Mammary epithelial cell (primary cell): ENCODE measurements at regions of chr3 and their contacts with region 1.

Region 1: GRCh38 chr3:49171119-49171774 is at the start of gene KLHDC8B:
- DNase-seq: peak; percentile 63
- H3K4me3 ChIP-seq: peak within 1 kb of the TSS; percentile 66 to 78 (median 70)
- H3K27ac ChIP-seq: no peak within 1 kb of the TSS
- H3K4me1 ChIP-seq: peaks cover 9% of the 10 kb centered on the region
- H3K27me3 ChIP-seq: no peaks in the 10 kb centered on the region
- CTCF ChIP-seq: peak; percentile 83 to 97
- total RNA-seq, gene KLHDC8B: 10.9 to 25.7 TPM

Region 2: GRCh38 chr3:49276475-49277382 is 105.5 kb after region 1 on chr3 and contains the start of gene C3orf62:
- CTCF ChIA-PET with region 1: interaction called, 7 read pairs
- dilution Hi-C with region 1: no loop called
- in situ Hi-C with region 1: loop called in 1 of 2 experiments (anchors 10 kb)
- intact Hi-C with region 1: loop called (anchors 2 kb)
- DNase-seq: peak; percentile 54
- H3K4me3 ChIP-seq: peak within 1 kb of the TSS; percentile 25 to 53 (median 25)
- H3K27ac ChIP-seq: no peak within 1 kb of the TSS
- H3K4me1 ChIP-seq: peaks cover 14% of the 10 kb centered on the region
- H3K27me3 ChIP-seq: no peaks in the 10 kb centered on the region
- CTCF ChIP-seq: no peak
- total RNA-seq, gene C3orf62: 2.3 to 5.7 TPM

Region 3: DNA sequence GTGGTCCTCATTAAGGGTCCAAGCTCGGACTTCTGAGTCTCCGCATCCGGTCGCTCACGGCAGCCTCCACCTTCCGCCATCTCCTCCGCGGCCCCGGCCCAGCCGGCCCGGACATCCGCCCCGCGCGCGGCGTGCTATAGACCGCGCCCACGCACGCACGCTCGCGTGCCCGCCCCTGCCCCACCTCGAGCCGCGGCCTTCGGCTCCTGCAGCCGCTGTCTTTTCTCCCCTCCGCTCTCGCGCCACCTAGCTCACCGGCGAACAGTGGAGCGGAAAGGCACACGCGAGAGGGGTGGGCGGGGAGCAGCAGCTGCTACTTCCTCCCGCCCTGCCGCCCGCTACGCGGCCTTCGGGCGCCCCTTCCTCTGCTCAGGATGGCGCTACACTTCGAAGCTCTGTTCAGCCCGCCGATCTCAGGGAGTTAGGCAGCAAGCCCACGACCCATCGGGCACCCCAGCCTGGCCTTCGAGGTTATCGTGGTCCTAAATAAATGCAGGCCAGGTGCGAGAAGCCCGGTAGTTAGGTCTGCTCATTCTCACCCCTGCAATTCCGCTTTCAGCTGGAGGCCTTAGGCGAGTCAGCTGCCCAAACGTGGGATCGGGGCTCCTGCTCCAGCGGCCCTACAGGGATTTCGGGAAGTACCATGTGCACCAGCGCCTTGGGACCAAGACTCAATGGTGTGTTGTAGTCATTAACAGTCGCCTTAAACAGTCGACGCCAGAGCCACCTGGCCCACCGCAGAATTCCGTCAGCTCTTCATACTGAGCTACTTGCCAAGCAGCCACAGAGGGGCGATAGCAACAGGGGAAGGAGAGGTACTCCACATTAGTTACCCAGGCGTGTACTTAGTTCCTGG is 168.9 kb after region 1 on chr3 and contains the start of gene USP4:
- CTCF ChIA-PET with region 1: no interaction called
- dilution Hi-C with region 1: no loop called
- in situ Hi-C with region 1: no loop called
- intact Hi-C with region 1: loop called (anchors 1 kb)
- DNase-seq: peak; percentile 85
- H3K4me3 ChIP-seq: peak within 1 kb of the TSS; percentile 68 to 86 (median 83)
- H3K27ac ChIP-seq: peak within 1 kb of the TSS; percentile 67
- H3K4me1 ChIP-seq: peaks cover 15% of the 10 kb centered on the region
- H3K27me3 ChIP-seq: no peaks in the 10 kb centered on the region
- CTCF ChIP-seq: peak; percentile 31 to 58
- total RNA-seq, gene USP4: 19.0 to 54.6 TPM

Region 4: GRCh38 chr3:49411968-49412631 is 240.9 kb after region 1 on chr3 and contains the starts of genes RHOA and TCTA:
- CTCF ChIA-PET with region 1: interaction called, 3 read pairs
- dilution Hi-C with region 1: loop called (anchors 5 kb)
- in situ Hi-C with region 1: no loop called
- intact Hi-C with region 1: loop called (anchors 2 kb)
- DNase-seq: peak; percentile 100
- H3K4me3 ChIP-seq: peak within 1 kb of the TSS; percentile 86 to 94 (median 90)
- H3K27ac ChIP-seq: peak within 1 kb of the TSS; percentile 91
- H3K4me1 ChIP-seq: peaks cover 35% of the 10 kb centered on the region
- H3K27me3 ChIP-seq: no peaks in the 10 kb centered on the region
- CTCF ChIP-seq: no peak
- total RNA-seq, gene RHOA: 406 to 421 TPM
- total RNA-seq, gene TCTA: 17.3 to 21.7 TPM

Region 5: GRCh38 chr3:49454458-49454857 is 283.2 kb after region 1 on chr3:
- CTCF ChIA-PET with region 1: no interaction called
- dilution Hi-C with region 1: no loop called
- in situ Hi-C with region 1: loop called in 1 of 2 experiments (anchors 25 kb)
- intact Hi-C with region 1: loop called (anchors 1 kb)
- DNase-seq: peak; percentile 47
- H3K4me3 ChIP-seq: no peak overlapping the region
- H3K27ac ChIP-seq: no peak overlapping the region
- H3K4me1 ChIP-seq: peaks cover 16% of the 10 kb centered on the region
- H3K27me3 ChIP-seq: no peaks in the 10 kb centered on the region
- CTCF ChIP-seq: peak; percentile 45 to 55

Region 6: GRCh38 chr3:49747792-49748480 is 576.7 kb after region 1 on chr3:
- CTCF ChIA-PET with region 1: no interaction called
- dilution Hi-C with region 1: no loop called
- in situ Hi-C with region 1: no loop called
- intact Hi-C with region 1: no loop called
- DNase-seq: peak; percentile 67
- H3K4me3 ChIP-seq: no peak overlapping the region
- H3K27ac ChIP-seq: no peak overlapping the region
- H3K4me1 ChIP-seq: peaks cover 14% of the 10 kb centered on the region
- H3K27me3 ChIP-seq: no peaks in the 10 kb centered on the region
- CTCF ChIP-seq: no peak